SK-N-SH (cell line): ENCODE measurements at regions of chr15 and their contacts with region 1.

Region 1: DNA sequence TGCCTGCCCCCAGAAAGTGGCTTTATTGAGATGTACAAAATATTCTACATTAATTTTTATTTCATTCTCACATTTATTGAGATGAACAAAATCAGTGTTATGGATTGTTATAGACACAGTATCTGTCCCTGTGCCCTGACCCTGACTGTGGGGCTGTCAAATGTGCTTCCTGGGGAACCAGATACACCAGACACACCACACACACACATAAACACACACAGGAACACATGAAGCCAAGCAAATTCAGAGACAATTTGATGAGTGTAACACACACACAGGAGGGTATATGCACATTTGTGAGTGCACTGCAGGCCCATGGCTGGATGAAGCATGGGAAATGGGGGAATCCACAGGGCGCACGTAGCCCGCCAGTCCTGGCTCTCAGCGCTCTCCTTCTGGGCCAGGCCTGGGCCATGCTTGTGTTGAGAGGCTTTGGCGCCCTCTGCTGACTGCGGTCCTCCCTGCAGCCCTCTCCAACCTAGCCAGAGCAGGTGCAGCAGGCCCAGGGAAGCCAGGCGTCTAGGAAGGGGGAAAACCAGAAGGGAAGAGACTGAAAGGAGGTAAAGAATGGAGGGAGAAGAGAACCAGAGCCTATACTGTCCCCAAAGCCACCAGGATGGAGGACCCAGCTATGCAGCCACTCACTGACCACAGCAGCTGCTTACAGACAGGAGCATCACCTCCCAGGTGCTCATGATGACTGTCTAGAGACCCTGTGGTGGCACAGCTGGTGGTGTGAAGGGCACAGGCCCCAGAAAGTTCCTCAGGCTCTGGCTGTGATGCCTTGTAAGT is 18.0 kb upstream of the LOXL1 start:
- DNase-seq: peak; percentile 86
- H3K4me3 ChIP-seq: no peak overlapping the region; a peak in 1 of 4 replicates
- H3K27ac ChIP-seq: no peak overlapping the region
- H3K4me1 ChIP-seq: peaks cover 0 to 2% of the 10 kb centered on the region in 2 experiments; a peak in 1 of 4 replicates
- H3K27me3 ChIP-seq: no peaks in the 10 kb centered on the region
- CTCF ChIP-seq: peak; percentile 90
- EP300 ChIP-seq: no peak
- RAD21 ChIP-seq: peak; percentile 91

Region 2: DNA sequence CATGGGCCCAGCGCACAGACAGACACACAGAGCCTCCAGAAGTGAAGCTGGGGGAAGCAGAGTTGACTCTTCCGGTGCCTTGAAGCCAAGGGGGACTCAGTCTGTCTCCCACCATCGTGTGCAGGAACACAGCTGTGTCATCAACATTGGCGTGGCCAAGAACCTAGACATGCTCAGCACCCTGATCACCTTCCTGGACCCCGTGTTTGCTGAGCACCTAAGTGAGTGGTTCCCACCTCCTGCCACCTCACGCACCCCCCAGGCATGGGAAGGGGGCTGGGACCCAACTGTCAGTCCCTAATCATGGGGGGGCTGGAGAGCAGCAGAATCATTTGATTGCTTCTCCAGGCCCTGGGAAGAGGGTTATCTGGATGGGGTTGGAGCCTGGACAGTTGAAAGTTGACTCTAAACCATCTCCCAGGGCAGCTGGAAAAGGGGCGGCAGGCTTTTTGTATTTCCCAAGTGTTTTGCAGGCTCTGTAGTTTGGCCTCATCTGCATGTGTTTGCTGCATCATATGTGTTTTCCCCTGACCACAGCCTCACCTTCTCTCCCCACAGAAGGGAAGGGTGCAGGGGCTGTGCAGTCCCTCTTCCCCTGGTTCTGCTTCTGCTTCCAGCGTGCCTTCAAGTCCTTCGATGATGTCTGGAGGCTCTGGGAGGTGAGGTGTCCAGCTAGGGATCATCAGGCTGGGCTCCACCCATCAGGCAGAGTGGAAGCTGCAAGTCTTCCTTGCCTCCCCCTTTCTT is 22.1 kb before region 1 on chr15:
- CTCF ChIA-PET with region 1: interaction called, 10 read pairs
- POLR2A ChIA-PET with region 1: no interaction called
- DNase-seq: no peak
- H3K4me3 ChIP-seq: no peak overlapping the region
- H3K27ac ChIP-seq: no peak overlapping the region
- H3K4me1 ChIP-seq: peaks cover 0 to 12% of the 10 kb centered on the region in 2 experiments; a peak in 1 of 4 replicates
- H3K27me3 ChIP-seq: peaks cover 8% of the 10 kb centered on the region; the same call in 1 of the 2 replicates
- CTCF ChIP-seq: no peak
- EP300 ChIP-seq: no peak
- RAD21 ChIP-seq: no peak

Region 3: DNA sequence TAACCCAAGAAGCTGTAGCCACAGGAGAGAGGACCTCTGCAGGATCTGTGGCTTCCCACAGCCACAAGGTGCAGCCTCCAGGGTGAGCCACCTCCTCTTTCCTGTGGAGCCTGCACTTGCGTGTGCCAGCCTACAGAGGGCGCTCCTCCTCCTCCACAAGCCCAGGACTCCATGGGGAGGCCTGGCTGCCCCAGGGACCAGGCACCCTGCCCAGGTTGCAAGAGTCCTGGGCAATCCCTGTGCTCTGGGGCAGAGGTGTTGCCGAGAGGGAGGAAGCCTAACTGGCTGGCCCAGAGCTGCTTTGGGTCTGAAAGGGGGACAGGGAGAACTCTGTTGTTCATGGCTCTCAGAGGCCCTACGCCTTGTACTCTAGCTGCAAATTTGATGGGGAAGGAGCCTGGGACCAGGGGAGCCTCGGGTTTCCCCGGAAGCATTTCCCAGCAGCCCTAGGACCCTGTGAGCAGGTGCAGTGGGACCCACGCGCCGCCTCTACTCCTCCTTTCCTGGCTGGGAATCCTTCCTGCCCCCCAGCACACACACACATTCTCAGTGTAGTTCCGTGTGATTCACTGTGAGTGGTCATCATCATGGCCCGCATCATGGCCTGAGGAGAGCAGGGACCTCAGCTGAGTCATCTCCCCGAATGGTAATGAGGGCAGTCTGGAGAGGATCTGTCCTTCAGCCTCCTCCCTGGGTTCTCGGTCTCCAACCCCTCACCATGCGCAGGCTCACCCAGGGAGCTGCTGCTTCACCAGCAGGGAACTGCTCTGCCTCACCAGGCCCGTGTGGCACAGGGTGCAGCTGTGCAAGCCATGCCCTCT is 10.6 kb before region 1 on chr15:
- CTCF ChIA-PET with region 1: interaction called, 93 read pairs
- POLR2A ChIA-PET with region 1: no interaction called
- DNase-seq: peak; percentile 81
- H3K4me3 ChIP-seq: no peak overlapping the region
- H3K27ac ChIP-seq: peak overlapping the region; percentile 12 to 80; a peak in 3 of 4 replicates
- H3K4me1 ChIP-seq: peaks cover 19 to 28% of the 10 kb centered on the region in 2 experiments; a peak in 3 of 4 replicates
- H3K27me3 ChIP-seq: no peaks in the 10 kb centered on the region
- CTCF ChIP-seq: peak; percentile 96
- EP300 ChIP-seq: no peak; a peak in 1 of 4 replicates
- RAD21 ChIP-seq: peak; percentile 63

Region 4: GRCh38 chr15:73924171-73924921 is 16.1 kb after region 1 on chr15:
- CTCF ChIA-PET with region 1: interaction called, 51 read pairs
- POLR2A ChIA-PET with region 1: interaction called, 3 read pairs
- DNase-seq: no peak
- H3K4me3 ChIP-seq: peak overlapping the region in 1 of 2 experiments; percentile 31; a peak in 1 of 4 replicates
- H3K27ac ChIP-seq: peak overlapping the region; percentile 22 to 93
- H3K4me1 ChIP-seq: peaks cover 39 to 56% of the 10 kb centered on the region in 2 experiments; a peak in 3 of 4 replicates
- H3K27me3 ChIP-seq: no peaks in the 10 kb centered on the region
- CTCF ChIP-seq: no peak
- EP300 ChIP-seq: peak in 1 of 2 experiments; percentile 69; a peak in 2 of 4 replicates
- RAD21 ChIP-seq: no peak

Region 5: GRCh38 chr15:73936181-73936580 is 28.0 kb after region 1 on chr15:
- CTCF ChIA-PET with region 1: interaction called, 12 read pairs
- POLR2A ChIA-PET with region 1: no interaction called
- DNase-seq: peak; percentile 70
- H3K4me3 ChIP-seq: no peak overlapping the region
- H3K27ac ChIP-seq: peak overlapping the region in 1 of 2 experiments; percentile 64; a peak in 2 of 4 replicates
- H3K4me1 ChIP-seq: peaks cover 53 to 67% of the 10 kb centered on the region in 2 experiments
- H3K27me3 ChIP-seq: no peaks in the 10 kb centered on the region
- CTCF ChIP-seq: peak; percentile 24; the same call in 1 of the 2 replicates
- EP300 ChIP-seq: no peak
- RAD21 ChIP-seq: peak; percentile 36